ENCODE measurements at regions of chr13 and their contacts with region 1.

Region 1: GRCh38 chr13:20495082-20496023 is 30.3 kb downstream of the CRYL1 start:
- DNase-seq: peak; percentile 31 to 81 (median 50)
- ATAC-seq: peak; percentile 97
- H3K4me3 ChIP-seq: no peak overlapping the region
- H3K4me3 Mint-ChIP-seq: no peak overlapping the region
- H3K27ac ChIP-seq: no peak overlapping the region
- H3K27ac Mint-ChIP-seq: no peak overlapping the region
- H3K4me1 ChIP-seq: peaks cover 6% of the 10 kb centered on the region
- H3K4me1 Mint-ChIP-seq: no peaks in the 10 kb centered on the region
- H3K27me3 ChIP-seq: no peaks in the 10 kb centered on the region
- H3K27me3 Mint-ChIP-seq: no peaks in the 10 kb centered on the region
- CTCF ChIP-seq: peak; percentile 99

Region 2: GRCh38 chr13:20301403-20302071 is 193.8 kb before region 1 on chr13:
- CTCF ChIA-PET with region 1: no interaction called
- POLR2A ChIA-PET with region 1: no interaction called
- intact Hi-C with region 1: loop called in 1 of 2 experiments (anchors 5 kb)
- DNase-seq: no peak
- ATAC-seq: no peak
- H3K4me3 ChIP-seq: peak overlapping the region; percentile 14
- H3K4me3 Mint-ChIP-seq: no peak overlapping the region
- H3K27ac ChIP-seq: no peak overlapping the region
- H3K27ac Mint-ChIP-seq: no peak overlapping the region
- H3K4me1 ChIP-seq: peaks cover 5% of the 10 kb centered on the region
- H3K4me1 Mint-ChIP-seq: no peaks in the 10 kb centered on the region
- H3K27me3 ChIP-seq: peaks cover 19 to 21% of the 10 kb centered on the region in 2 experiments
- H3K27me3 Mint-ChIP-seq: peaks cover 55% of the 10 kb centered on the region
- CTCF ChIP-seq: no peak

Region 3: DNA sequence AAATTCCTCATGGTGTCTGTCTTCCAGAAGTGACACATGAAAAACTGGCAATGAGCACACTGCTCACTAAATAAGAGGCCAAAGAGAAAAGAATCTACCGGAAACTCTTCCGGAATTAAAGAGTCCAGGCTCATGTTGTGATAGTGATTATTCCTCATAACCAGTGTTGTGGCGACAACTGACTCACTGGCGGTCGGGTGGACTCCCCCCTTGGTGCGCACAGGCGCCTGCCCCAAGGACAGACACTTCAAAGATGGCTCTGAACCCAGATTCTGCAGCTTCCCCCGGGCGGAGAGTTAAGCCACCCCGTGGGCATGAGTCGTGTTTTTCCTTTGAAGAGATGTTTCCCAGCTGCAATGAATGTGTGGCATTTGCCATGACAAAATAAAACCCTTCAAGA is 218.4 kb after region 1 on chr13:
- CTCF ChIA-PET with region 1: no interaction called
- POLR2A ChIA-PET with region 1: no interaction called
- intact Hi-C with region 1: loop called in 1 of 2 experiments (anchors 1 kb)
- DNase-seq: no peak
- ATAC-seq: no peak
- H3K4me3 ChIP-seq: no peak overlapping the region
- H3K4me3 Mint-ChIP-seq: no peak overlapping the region
- H3K27ac ChIP-seq: no peak overlapping the region
- H3K27ac Mint-ChIP-seq: no peak overlapping the region
- H3K4me1 ChIP-seq: peaks cover 11% of the 10 kb centered on the region
- H3K4me1 Mint-ChIP-seq: peaks cover 11% of the 10 kb centered on the region
- H3K27me3 ChIP-seq: no peaks in the 10 kb centered on the region
- H3K27me3 Mint-ChIP-seq: peaks cover 9% of the 10 kb centered on the region
- CTCF ChIP-seq: no peak

Region 4: DNA sequence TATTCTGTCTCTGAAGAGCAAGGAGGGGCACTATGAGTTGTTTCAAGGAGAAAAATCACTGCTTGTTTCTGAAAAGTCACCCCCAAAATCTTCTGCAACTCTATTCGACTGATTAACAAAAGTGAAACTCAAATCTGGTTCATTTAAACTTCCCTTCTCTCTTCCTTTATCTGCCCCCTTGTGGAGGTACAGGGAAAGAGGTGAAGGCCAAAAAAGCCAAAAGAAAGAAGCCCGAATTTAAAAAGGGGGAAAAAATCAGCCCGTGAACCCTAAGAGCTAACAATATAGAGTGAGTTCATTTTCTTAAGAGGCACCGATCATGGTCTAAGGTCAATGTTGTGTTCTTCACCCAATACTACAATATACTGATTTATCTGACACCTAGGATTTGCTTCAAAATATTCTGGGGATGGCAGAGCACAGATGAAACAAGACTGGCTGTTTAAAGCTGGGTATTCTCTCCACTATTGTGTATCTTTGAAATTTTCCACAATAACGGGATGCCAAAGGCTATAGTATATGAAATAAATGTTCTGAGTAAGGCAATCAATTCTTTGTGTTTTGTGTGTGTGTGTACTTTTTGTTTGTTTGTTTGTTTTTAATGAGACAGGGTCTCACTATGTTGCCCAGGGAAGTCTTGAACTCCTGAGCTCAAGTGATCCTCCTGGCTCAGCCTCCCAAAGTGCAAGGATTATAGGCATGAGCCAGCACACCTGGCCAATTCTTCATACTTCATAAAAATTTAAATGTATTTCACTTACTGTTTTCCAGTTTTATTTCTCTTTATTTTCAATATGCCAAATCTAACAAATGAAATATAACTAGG is 333.4 kb after region 1 on chr13:
- CTCF ChIA-PET with region 1: interaction called, 3 read pairs
- POLR2A ChIA-PET with region 1: no interaction called
- intact Hi-C with region 1: loop called (anchors 1 kb)
- DNase-seq: peak in 9 of 14 experiments; percentile 4 to 79 (median 25)
- ATAC-seq: peak; percentile 95
- H3K4me3 ChIP-seq: peak overlapping the region; percentile 13
- H3K4me3 Mint-ChIP-seq: peak overlapping the region; percentile 12
- H3K27ac ChIP-seq: no peak overlapping the region
- H3K27ac Mint-ChIP-seq: peak overlapping the region; percentile 48
- H3K4me1 ChIP-seq: no peaks in the 10 kb centered on the region
- H3K4me1 Mint-ChIP-seq: peaks cover 12% of the 10 kb centered on the region
- H3K27me3 ChIP-seq: no peaks in the 10 kb centered on the region
- H3K27me3 Mint-ChIP-seq: no peaks in the 10 kb centered on the region
- CTCF ChIP-seq: peak; percentile 79

Region 5: GRCh38 chr13:21476893-21477472 is 981.6 kb after region 1 on chr13:
- CTCF ChIA-PET with region 1: no interaction called
- POLR2A ChIA-PET with region 1: no interaction called
- intact Hi-C with region 1: loop called (anchors 2 to 5 kb)
- DNase-seq: peak; percentile 64 to 89 (median 72)
- ATAC-seq: peak; percentile 80
- H3K4me3 ChIP-seq: peak overlapping the region; percentile 37
- H3K4me3 Mint-ChIP-seq: peak overlapping the region; percentile 78
- H3K27ac ChIP-seq: no peak overlapping the region
- H3K27ac Mint-ChIP-seq: no peak overlapping the region
- H3K4me1 ChIP-seq: peaks cover 6% of the 10 kb centered on the region
- H3K4me1 Mint-ChIP-seq: peaks cover 17% of the 10 kb centered on the region
- H3K27me3 ChIP-seq: no peaks in the 10 kb centered on the region
- H3K27me3 Mint-ChIP-seq: peaks cover 10% of the 10 kb centered on the region
- CTCF ChIP-seq: peak; percentile 97